Cardiac septum (tissue), 1 donor: ENCODE measurements at regions of chr6 and their contacts with region 1.

Region 1: GRCh38 chr6:138115877-138116660 is 8.8 kb upstream of the PERP start:
- DNase-seq: no peak

Region 2: DNA sequence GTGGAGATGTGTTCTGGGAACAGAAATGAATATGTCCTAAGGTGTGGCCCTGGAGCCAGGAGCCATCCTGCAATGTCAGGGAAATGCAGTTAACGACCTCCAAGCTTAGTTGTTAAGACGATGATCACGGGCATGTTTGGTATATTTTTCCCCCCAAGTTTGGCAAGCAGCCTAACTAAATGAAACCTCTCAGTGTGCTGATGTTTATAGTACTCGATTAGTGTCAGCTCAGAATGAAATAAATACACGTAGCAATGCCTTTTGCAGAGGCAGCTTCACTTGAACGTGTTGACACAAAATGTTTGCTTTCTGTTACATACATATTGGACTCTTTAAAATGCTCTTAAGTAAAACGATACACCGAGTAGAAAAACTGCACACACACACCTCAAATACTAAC is 545.7 kb before region 1 on chr6:
- intact Hi-C with region 1: no loop called
- DNase-seq: no peak

Region 3: DNA sequence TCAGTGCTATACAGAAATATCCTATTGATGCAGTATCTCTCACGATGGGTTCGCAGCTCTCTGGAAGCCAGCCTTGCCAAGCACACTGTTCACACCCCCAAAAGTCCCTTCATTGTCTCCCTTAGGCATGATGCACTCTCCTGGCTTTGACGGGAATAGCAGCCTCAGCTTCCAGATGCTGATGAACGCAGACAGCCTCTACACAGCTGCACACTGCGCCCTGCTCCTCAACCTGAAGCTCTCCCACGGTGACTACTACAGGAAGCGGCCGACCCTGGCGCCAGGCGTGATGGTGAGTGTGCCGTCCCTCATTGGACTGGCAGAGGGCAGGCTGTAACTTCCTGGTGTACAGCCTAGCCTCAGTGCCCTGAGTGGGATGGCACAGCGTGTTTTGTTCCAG is 162.3 kb after region 1 on chr6:
- intact Hi-C with region 1: loop called (anchors 1 kb)
- DNase-seq: no peak

Region 4: GRCh38 chr6:138403801-138404661 is 288.0 kb after region 1 on chr6 and contains the start of gene HEBP2:
- intact Hi-C with region 1: loop called (anchors 5 kb)
- DNase-seq: peak; percentile 99
- total RNA-seq, gene HEBP2: 98.9 TPM

Region 5: DNA sequence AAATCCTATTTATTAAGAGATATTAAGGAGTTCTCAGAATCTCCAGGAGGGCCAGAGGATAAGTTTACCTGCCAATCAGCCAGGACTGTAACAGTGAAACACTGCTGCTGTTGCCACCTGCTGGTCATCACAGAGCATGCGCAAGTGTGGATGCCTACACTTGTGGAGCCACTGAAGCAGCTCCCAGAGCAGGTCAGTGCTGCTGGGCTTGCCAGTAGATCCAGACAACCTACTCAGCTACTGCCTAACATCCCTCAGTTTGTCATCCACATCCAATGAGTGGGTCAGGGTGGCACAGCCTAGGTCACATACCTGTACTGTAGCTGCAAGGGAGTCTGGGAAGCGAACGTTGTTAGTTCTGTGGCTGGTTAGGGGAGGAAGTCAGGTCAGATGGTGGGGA is 401.6 kb after region 1 on chr6:
- intact Hi-C with region 1: loop called (anchors 5 kb)
- DNase-seq: peak; percentile 79

Region 6: DNA sequence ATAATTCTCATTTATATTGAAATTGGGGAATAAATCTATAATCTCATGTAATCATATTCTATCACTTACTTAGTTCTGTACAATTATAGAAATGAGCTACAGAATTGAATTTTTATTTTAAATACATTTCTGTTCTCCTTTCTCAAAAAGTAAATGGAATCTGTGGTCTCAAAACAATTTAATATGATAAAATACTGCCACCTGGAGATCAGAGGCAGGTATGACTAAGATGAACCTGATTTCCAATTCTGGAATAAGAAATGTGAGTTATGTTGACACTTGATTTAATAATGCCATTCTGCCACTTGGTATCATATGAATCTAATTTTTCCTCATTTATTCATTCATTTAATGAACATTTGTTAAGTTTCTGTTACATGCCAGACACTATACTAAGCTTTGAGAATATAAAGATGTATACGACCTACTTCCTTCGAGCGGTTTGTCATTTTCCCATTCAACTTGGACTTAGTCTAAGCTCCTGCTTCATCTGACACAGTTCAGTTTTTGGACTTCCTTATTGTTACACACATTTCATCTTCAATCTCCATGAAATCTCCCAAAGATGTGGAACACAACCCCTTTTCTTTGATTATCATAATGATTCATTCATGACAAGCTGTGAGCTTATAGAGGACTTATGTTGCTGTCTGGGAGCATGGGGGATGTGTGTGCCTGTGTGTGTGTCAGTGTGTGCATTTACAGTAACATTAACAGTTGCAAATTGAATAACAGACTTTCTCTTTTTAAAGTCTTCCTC is 650.0 kb after region 1 on chr6:
- intact Hi-C with region 1: loop called (anchors 5 kb)
- DNase-seq: no peak